ENCODE measurements at regions of chr2 and their contacts with region 1.

Region 1: DNA sequence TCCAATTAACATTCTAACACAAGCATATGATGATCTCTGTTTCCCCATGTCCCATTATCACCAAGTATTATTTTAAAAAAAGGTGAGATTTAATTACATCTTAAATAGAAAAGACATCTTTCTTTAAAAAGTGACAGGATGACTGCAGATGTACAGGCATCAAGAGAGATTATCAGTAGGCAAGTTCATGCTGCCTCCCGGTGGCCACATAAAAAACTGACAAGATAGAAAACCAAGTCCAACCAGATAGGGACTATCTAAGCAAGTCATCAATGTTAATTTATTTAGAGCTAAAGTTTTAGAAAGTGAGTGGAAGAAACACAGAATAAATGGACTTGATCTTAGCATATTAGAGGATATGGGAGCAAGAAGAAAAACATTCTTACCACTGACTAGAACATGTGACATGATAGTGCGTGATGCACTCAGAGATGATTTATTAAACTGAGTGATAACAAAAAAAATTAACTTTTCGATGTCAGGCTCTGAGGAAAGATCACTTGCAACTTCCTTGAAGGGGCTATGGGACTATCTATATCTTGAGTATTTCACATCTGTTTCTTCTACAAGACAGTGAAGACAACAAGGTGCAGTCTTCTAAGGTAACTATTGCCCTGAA is 5.4 kb upstream of the TDRD15 start:
- DNase-seq: no peak
- ATAC-seq: no peak

Region 2: GRCh38 chr2:20661067-20661980 is 457.1 kb before region 1 on chr2:
- intact Hi-C with region 1: loop called (anchors 2 kb)
- DNase-seq: peak; percentile 60
- ATAC-seq: peak; percentile 72

Region 3: GRCh38 chr2:20916604-20917286 is 201.7 kb before region 1 on chr2:
- intact Hi-C with region 1: no loop called
- DNase-seq: no peak
- ATAC-seq: peak; percentile 67

Region 4: DNA sequence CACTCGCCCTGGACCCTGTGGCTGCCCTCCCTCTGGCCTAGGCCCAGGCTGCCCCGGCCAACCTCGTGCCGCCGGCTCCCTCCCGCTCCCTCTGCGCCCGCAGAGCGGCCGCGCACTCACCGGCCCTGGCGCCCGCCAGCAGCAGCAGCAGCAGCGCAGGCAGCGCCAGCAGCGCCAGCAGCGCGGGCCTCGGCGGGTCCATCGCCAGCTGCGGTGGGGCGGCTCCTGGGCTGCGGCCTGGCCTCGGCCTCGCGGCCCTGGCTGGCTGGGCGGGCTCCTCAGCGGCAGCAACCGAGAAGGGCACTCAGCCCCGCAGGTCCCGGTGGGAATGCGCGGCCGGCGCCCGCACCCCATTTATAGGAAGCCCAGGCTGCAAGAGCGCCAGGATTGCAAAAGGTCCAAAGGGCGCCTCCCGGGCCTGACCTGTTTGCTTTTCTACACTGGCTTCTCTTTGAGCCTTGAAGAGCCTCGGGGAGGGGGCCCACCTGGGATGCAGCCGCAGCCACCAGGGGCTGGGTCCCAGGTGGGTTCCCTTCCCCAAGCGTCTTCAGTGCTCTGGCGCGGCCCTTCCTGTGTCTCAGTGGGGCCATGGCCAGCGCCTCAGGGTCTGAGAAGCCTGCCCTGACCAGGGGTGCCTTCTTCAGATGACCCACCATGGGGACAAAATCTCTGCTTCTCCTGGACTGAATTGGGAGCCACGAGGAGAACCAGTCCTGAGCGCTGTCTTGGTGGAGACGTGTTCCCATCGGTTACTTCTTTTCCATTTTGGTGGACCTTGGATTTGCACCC is 74.5 kb before region 1 on chr2 and contains the start of gene APOB:
- intact Hi-C with region 1: loop called (anchors 2 kb)
- DNase-seq: no peak
- ATAC-seq: peak; percentile 44
- total RNA-seq, gene APOB: 12.5 TPM

Region 5: GRCh38 chr2:21346984-21347383 is 228.6 kb after region 1 on chr2:
- intact Hi-C with region 1: no loop called
- DNase-seq: no peak
- ATAC-seq: no peak

Measured in Right ventricle myocardium inferior (tissue), 1 donor.